ENCODE measurements at regions of chr16 and their contacts with region 1.

Region 1: DNA sequence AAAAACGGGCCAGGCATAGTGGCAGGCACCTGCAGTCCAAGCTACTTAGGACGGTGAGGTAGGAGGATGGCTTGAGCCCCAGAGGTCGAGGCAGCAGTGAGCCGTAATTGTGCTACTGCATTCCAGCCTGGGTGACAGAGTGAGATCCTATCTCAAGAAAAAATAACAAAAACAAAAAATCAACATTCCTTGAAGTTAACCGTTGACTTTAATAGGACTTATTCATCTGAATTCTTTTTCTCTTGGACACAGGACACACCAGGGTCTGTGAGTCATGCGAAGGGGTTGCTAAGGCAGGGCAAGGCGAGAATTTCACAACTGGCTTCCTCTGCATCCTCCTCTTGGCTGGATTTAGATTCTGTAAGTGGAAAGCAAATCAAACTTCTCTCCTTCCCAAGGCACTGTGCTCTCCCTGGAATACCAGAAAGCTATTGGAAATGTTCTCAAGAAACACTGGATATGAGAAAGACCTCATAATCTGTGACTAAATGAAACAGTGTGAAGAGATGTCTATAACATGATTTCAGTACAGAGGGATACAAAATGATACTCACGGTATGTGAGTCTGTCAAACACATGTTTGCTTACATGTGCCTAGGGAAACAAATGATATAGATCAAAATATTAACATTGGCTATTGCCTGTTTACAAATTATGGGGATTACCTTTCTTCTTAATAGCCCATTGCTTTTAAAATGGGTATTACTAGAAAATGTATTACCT is 99.6 kb downstream of the SYCE1L start:
- DNase-seq: no peak
- H3K4me3 ChIP-seq: no peak overlapping the region
- H3K27ac ChIP-seq: no peak overlapping the region
- H3K4me1 ChIP-seq: no peaks in the 10 kb centered on the region
- H3K27me3 ChIP-seq: no peaks in the 10 kb centered on the region
- CTCF ChIP-seq: no peak
- POLR2A ChIP-seq: no peak

Region 2: DNA sequence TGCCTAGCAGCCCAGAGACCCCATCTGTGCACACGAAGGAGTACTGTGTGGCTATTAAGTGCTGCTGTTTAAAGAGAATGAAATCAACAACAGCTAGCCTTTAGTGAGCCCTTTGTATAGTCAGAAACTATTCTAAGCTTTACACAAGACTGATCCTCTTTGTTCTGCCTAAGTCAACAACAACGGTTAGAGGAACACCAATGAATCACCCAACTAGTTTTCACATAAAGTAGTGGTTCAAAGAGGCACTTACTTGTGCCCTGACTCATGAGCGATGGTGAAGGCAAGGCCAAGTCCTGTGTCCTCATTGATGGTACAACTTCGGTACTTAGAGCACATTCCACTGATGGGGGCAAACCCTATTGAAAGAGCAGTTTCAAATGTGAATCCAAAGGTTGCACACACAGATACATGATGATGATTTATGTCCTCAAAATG is 60.3 kb after region 1 on chr16:
- intact Hi-C with region 1: loop called (anchors 10 kb)
- DNase-seq: peak; percentile 29
- H3K4me3 ChIP-seq: no peak overlapping the region
- H3K27ac ChIP-seq: no peak overlapping the region
- H3K4me1 ChIP-seq: no peaks in the 10 kb centered on the region
- H3K27me3 ChIP-seq: no peaks in the 10 kb centered on the region
- CTCF ChIP-seq: no peak
- POLR2A ChIP-seq: no peak

Measured in prostate gland (tissue), 2 donors.